A549 (cell line): ENCODE measurements at regions of chr2 and their contacts with region 1.

Region 1: GRCh38 chr2:158011055-158011771 is 90.5 kb upstream of the UPP2 start:
- DNase-seq: no peak
- ATAC-seq: peak in 1 of 2 experiments; percentile 53; a peak in 3 of 6 replicates
- H3K4me3 ChIP-seq: no peak overlapping the region
- H3K27ac ChIP-seq: no peak overlapping the region
- H3K4me1 ChIP-seq: no peaks in the 10 kb centered on the region
- CTCF ChIP-seq: no peak
- EP300 ChIP-seq: no peak
- POLR2A ChIP-seq: no peak
- RAD21 ChIP-seq: no peak

Region 2: GRCh38 chr2:157777427-157777826 is 233.8 kb before region 1 on chr2:
- CTCF ChIA-PET with region 1: interaction called, 12 read pairs
- POLR2A ChIA-PET with region 1: no interaction called
- DNase-seq: peak; percentile 24 to 56
- ATAC-seq: peak in 1 of 2 experiments; percentile 60; a peak in 3 of 6 replicates
- H3K4me3 ChIP-seq: no peak overlapping the region
- H3K27ac ChIP-seq: no peak overlapping the region
- H3K4me1 ChIP-seq: peaks cover 3% of the 10 kb centered on the region; the same call in 1 of the 3 replicates
- CTCF ChIP-seq: peak; percentile 85
- EP300 ChIP-seq: no peak
- POLR2A ChIP-seq: no peak
- RAD21 ChIP-seq: peak; percentile 88 to 91

Region 3: GRCh38 chr2:157784169-157784822 is 226.9 kb before region 1 on chr2:
- CTCF ChIA-PET with region 1: interaction called, 12 read pairs
- POLR2A ChIA-PET with region 1: no interaction called
- DNase-seq: peak; percentile 28 to 41
- ATAC-seq: peak; percentile 84 to 93
- H3K4me3 ChIP-seq: peak overlapping the region; percentile 29
- H3K27ac ChIP-seq: peak overlapping the region; percentile 67 to 80
- H3K4me1 ChIP-seq: peaks cover 56% of the 10 kb centered on the region
- CTCF ChIP-seq: no peak
- EP300 ChIP-seq: no peak
- POLR2A ChIP-seq: no peak
- RAD21 ChIP-seq: no peak